ENCODE measurements at regions of chr15 and their contacts with region 1.

Region 1: DNA sequence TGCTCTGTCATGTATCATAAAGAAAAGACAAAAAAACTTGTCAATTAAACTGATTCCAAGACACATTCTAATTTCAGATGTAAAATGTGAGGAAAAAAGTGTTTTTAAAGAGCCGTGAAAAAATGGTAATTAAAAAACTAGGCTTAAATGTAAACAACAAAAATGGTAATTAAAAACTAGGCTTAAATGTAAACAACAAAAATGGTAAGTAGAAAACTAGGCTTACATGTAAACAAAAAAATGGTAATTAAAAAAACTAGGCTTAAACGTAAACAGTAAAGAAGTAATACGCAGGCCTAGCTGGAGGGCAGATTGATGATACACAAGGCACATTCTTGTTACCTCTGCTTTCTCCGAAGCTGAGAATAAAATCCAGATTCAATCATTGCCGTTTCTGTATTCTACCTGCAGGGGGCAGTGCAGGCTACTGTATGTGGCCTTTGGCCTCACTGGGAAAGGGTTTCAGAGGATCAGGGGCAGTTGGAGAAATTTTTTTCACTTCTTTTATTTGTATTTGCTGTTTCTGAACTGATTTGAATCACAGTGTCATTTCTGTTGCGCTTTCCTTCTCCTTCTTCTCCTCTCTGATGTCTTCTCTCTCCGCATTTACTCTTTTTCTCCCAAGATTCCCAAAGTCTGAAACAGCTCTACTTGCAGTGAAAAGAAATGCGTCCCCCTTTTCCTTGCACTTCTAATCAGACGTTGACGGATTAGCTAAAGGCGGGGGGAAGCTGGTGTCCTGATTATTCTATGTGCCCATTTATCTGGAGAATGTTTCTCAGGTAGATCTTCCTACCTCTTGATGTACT is 67.2 kb upstream of the MCTP2 start:
- DNase-seq: peak; percentile 63
- H3K4me3 ChIP-seq: no peak overlapping the region
- H3K27ac ChIP-seq: no peak overlapping the region
- H3K4me1 ChIP-seq: no peaks in the 10 kb centered on the region
- H3K27me3 ChIP-seq: no peaks in the 10 kb centered on the region

Region 2: GRCh38 chr15:94317201-94317600 is 153.0 kb after region 1 on chr15:
- in situ Hi-C with region 1: loop called (anchors 10 kb)
- DNase-seq: no peak
- H3K4me3 ChIP-seq: no peak overlapping the region
- H3K27ac ChIP-seq: no peak overlapping the region
- H3K4me1 ChIP-seq: 0 out of 2 replicates have a peak, but pooled peaks cover 5% of the 10 kb centered on the region
- H3K27me3 ChIP-seq: no peaks in the 10 kb centered on the region